CD8-positive, alpha-beta T cell (primary cell): ENCODE measurements at regions of chr1 and their contacts with region 1.

Region 1: GRCh38 chr1:13960375-13960987 is 260.5 kb downstream of the PRDM2 start:
- DNase-seq: peak; percentile 32 to 78 (median 66)
- ATAC-seq: no peak
- H3K4me3 ChIP-seq: no peak overlapping the region
- H3K4me3 Mint-ChIP-seq: no peak overlapping the region
- H3K27ac ChIP-seq: no peak overlapping the region
- H3K27ac Mint-ChIP-seq: no peak overlapping the region
- H3K4me1 ChIP-seq: no peaks in the 10 kb centered on the region
- H3K4me1 Mint-ChIP-seq: no peaks in the 10 kb centered on the region
- H3K27me3 ChIP-seq: no peaks in the 10 kb centered on the region
- H3K27me3 Mint-ChIP-seq: peaks cover 47% of the 10 kb centered on the region
- CTCF ChIP-seq: peak; percentile 81

Region 2: DNA sequence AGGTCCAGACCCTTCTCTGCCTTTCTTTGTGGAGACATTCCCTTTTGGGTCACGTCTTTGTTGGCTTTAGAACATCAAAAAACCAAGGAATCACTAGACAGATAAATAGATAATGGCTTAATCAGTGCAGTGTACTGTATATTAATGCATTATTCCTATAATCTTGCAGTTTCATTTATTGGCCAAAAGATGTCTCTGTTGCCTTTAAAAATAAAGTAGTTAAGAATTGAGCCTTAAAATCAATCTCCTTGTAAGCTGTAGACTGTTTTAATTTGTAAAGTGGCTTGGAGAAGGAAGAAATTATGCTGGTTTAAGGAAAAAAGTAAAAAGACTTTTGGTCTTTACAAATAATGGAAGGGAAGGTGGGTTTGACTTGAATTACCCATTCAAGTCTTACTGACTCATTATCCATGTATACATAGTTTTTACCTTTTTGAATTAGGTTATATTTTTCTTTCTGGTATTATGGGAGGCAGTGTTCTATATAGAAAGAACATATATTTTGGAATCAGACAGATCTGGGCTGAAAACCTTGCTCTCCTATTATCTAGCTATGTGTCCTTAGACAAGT is 1646.1 kb before region 1 on chr1:
- CTCF ChIA-PET with region 1: no interaction called
- POLR2A ChIA-PET with region 1: no interaction called
- intact Hi-C with region 1: loop called in 1 of 2 experiments (anchors 10 kb)
- DNase-seq: peak in 2 of 9 experiments; percentile 19 to 34
- ATAC-seq: peak; percentile 36
- H3K4me3 ChIP-seq: no peak overlapping the region
- H3K4me3 Mint-ChIP-seq: no peak overlapping the region
- H3K27ac ChIP-seq: no peak overlapping the region
- H3K27ac Mint-ChIP-seq: no peak overlapping the region
- H3K4me1 ChIP-seq: no peaks in the 10 kb centered on the region
- H3K4me1 Mint-ChIP-seq: no peaks in the 10 kb centered on the region
- H3K27me3 ChIP-seq: no peaks in the 10 kb centered on the region
- H3K27me3 Mint-ChIP-seq: no peaks in the 10 kb centered on the region
- CTCF ChIP-seq: peak; percentile 73

Region 3: DNA sequence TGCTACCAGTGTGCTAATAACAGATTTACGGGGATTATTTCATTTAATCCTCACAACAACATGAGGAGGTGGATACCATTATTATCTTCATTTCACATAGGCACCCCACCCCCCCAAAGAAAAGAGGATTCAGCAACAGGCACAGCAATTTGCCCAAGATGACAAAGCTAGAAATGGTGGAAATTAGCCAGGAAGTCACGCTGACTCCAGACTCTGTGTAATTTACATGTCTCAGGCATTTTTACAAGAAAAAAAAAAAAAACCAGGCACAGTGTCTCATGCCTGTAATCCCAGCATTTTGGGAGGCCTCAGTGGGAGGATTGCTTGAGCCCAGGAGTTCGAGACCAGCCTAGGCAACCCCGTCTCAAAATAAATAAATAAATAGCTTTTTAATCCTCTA is 298.0 kb before region 1 on chr1:
- CTCF ChIA-PET with region 1: interaction called, 16 read pairs
- POLR2A ChIA-PET with region 1: no interaction called
- intact Hi-C with region 1: loop called (anchors 1 kb)
- DNase-seq: no peak
- ATAC-seq: no peak
- H3K4me3 ChIP-seq: no peak overlapping the region
- H3K4me3 Mint-ChIP-seq: no peak overlapping the region
- H3K27ac ChIP-seq: no peak overlapping the region
- H3K27ac Mint-ChIP-seq: no peak overlapping the region
- H3K4me1 ChIP-seq: peaks cover 4% of the 10 kb centered on the region
- H3K4me1 Mint-ChIP-seq: peaks cover 5% of the 10 kb centered on the region
- H3K27me3 ChIP-seq: no peaks in the 10 kb centered on the region
- H3K27me3 Mint-ChIP-seq: peaks cover 5% of the 10 kb centered on the region
- CTCF ChIP-seq: no peak

Region 4: DNA sequence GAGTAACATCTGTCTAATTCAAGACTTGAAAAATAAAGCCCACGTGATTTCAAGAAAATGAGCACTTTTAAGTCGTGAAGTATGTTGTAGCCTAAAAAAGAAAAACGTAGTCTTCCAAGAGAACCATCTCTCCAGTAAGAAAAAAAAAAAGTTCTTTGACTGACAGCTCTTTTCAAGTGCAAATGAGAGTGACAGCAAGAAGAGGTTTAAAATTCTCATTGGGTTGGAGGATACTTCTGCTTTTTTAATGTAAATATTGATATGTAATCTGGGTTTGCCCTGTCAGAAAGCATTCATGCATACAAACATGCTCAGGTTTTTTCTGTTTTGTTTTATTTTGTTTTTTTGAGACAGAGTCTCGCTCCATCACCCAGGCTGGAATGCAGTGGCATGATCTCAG is 292.8 kb before region 1 on chr1:
- CTCF ChIA-PET with region 1: interaction called, 16 read pairs
- POLR2A ChIA-PET with region 1: no interaction called
- intact Hi-C with region 1: loop called (anchors 1 kb)
- DNase-seq: no peak
- ATAC-seq: no peak
- H3K4me3 ChIP-seq: no peak overlapping the region
- H3K4me3 Mint-ChIP-seq: no peak overlapping the region
- H3K27ac ChIP-seq: no peak overlapping the region
- H3K27ac Mint-ChIP-seq: no peak overlapping the region
- H3K4me1 ChIP-seq: peaks cover 4% of the 10 kb centered on the region
- H3K4me1 Mint-ChIP-seq: peaks cover 5% of the 10 kb centered on the region
- H3K27me3 ChIP-seq: no peaks in the 10 kb centered on the region
- H3K27me3 Mint-ChIP-seq: no peaks in the 10 kb centered on the region
- CTCF ChIP-seq: no peak

Region 5: GRCh38 chr1:13892671-13893325 is 67.7 kb before region 1 on chr1:
- CTCF ChIA-PET with region 1: no interaction called
- POLR2A ChIA-PET with region 1: no interaction called
- intact Hi-C with region 1: no loop called
- DNase-seq: no peak
- ATAC-seq: no peak
- H3K4me3 ChIP-seq: no peak overlapping the region
- H3K4me3 Mint-ChIP-seq: no peak overlapping the region
- H3K27ac ChIP-seq: no peak overlapping the region
- H3K27ac Mint-ChIP-seq: no peak overlapping the region
- H3K4me1 ChIP-seq: no peaks in the 10 kb centered on the region
- H3K4me1 Mint-ChIP-seq: peaks cover 5% of the 10 kb centered on the region
- H3K27me3 ChIP-seq: peaks cover 6 to 21% of the 10 kb centered on the region in 2 experiments
- H3K27me3 Mint-ChIP-seq: peaks cover 45% of the 10 kb centered on the region
- CTCF ChIP-seq: no peak